SK-MEL-5 (cell line): ENCODE measurements at regions of chr3 and their contacts with region 1.

Region 1: DNA sequence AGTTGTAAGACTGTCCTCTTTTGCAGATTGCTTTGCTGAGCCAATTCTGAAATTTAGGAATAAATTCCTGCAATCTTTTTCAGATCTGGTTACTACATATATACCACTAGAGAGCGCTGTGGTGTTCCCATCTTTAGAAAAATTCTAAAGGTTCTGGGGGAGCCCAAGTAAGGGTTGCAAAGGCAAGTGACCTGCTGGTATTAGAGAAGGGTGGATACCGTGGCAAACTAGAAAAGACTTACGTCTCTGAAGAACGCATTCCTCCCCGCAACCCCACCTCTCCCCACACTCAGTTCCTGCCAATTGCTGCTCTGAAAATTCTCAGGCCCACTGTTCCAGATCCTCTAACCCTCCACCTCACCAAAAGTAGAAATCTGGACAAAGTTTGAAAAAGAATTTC is 48.5 kb downstream of the EFHB start:
- DNase-seq: peak; percentile 64

Region 2: DNA sequence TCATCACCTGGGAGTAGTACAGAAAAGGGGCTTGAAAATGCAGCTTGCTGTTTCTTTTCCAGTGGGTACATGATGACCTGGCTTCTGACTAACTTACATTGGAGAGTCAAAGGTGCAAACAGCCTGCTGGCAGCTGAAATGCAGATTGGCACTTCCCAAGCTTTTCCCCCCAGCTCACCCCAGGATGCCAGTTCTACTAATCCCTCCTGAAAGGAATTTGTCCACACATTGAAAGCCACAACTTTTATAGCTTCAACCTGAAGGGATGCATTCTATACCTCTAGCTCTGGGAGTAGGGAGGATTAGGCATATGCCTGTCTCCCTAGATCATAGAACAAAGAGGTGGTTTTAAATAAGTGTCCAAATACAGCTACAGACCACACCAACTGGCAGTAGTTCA is 233.1 kb before region 1 on chr3:
- in situ Hi-C with region 1: no loop called
- DNase-seq: no peak

Region 3: GRCh38 chr3:20185701-20186598 is 300.5 kb after region 1 on chr3 and contains the start of gene SGO1:
- in situ Hi-C with region 1: loop called (anchors 25 kb)
- DNase-seq: peak; percentile 97
- total RNA-seq, gene SGO1: 12.6 and 13.6 TPM in 2 replicates

Region 4: DNA sequence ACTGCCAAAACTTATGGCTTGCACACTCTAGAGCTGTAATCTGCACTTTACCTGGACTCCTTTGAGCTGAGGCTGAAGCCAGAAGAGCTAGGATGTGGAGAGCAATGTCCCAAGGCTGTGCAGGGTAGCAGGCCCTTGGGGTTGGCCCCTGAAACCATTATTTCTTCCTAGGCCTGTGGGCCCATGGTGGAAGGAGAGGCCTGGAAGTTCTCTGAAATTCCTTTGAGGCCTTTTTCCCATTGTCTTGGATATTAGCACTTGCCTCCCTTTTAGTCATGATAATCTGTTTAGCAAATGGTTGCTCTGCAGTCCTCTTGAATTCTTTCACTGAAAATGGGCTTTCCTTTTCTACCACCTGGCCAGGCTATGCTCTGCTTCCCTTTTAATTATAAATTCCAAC is 402.6 kb after region 1 on chr3:
- in situ Hi-C with region 1: no loop called
- DNase-seq: no peak